Upper lobe of right lung (tissue), 1 donor: ENCODE measurements at regions of chr15 and their contacts with region 1.

Region 1: DNA sequence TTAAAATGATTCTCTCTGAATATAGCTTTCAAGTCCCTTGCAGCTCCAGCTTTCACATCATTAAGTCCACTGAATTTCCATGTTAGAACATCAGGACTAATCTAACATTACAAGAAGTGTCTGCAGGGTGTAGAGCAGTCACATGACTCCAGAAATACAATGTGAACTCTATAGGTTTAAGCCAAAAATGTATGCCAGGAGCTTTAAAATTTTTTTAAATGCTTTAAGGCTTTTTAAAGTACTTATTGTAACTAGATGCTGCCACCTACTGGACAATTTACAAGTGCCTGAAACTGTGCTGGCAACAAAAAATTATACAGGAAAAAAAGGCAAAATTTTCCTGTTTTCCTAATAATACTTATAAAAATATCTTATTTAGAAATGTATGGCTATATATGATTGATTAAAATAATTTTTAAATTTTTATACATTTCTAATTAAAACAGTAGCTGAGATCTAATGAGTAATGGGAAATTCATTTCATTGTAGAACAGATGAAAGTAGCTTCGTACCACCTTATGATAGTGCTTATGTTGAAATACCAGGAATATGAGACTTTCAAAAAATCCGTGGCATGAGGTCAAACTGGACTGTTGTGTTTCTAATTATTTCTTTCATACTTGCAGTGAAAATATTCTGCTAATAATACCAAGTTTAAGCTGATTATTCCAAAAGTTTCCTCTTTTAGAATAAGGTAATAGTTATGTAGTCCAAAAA is 25.7 kb downstream of the FSIP1 start:
- DNase-seq: no peak
- ATAC-seq: peak; percentile 31
- H3K4me3 ChIP-seq: no peak overlapping the region
- H3K27ac ChIP-seq: no peak overlapping the region
- H3K4me1 ChIP-seq: no peaks in the 10 kb centered on the region
- H3K27me3 ChIP-seq: no peaks in the 10 kb centered on the region
- CTCF ChIP-seq: peak; percentile 89

Region 2: GRCh38 chr15:39344662-39345141 is 412.3 kb before region 1 on chr15:
- intact Hi-C with region 1: no loop called
- DNase-seq: no peak
- ATAC-seq: no peak
- H3K4me3 ChIP-seq: no peak overlapping the region
- H3K27ac ChIP-seq: no peak overlapping the region
- H3K4me1 ChIP-seq: no peaks in the 10 kb centered on the region
- H3K27me3 ChIP-seq: no peaks in the 10 kb centered on the region
- CTCF ChIP-seq: no peak

Region 3: GRCh38 chr15:39686000-39686613 is 70.9 kb before region 1 on chr15:
- intact Hi-C with region 1: loop called (anchors 5 kb)
- DNase-seq: no peak
- ATAC-seq: peak; percentile 80
- H3K4me3 ChIP-seq: no peak overlapping the region
- H3K27ac ChIP-seq: no peak overlapping the region
- H3K4me1 ChIP-seq: no peaks in the 10 kb centered on the region
- H3K27me3 ChIP-seq: no peaks in the 10 kb centered on the region
- CTCF ChIP-seq: peak; percentile 88